ENCODE measurements at regions of chr2 and their contacts with region 1.

Region 1: DNA sequence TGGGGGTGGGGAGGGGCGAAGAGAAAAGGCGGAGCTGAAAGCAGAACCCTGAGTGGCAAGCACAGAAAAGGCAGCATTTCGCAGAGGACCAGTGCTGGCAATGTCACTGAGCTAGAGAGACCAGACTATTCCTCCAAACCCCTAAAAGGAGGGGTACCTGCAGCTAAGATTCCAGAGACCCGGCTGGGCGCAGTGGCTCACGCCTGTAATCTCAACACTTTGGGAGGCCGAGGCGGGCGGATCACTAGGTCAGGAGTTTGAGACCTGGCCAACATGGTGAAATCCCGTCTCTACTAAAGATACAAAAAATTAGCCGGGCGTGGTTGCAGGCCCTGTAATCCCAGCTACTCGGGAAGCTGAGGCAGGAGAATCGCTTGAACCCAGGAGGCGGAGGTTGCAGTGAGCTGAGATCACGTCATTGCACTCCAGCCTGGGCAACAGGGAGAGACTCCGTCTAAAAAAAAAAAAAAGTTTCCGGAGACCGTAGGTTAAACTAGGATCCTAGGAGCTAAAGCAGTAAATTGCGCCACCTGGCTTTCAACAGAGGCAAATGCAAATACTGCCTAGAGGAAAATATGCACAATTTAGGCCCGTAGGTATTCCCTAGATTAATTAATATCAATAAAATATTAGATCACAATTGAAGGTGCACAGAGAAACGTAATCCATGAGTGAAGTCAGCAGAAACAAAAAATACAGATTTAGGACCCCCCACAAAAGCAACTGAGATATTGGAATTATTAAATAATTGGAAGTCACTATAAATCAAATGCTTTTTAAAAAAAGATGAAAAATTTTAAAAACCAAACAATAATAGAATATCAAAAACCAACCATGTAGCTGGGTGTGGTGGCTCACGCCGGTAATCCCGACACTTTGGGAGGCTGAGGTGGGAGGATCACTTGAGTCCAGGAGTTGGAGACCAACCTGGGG is 4.9 kb downstream of the UCN start:
- DNase-seq: peak; percentile 66
- ATAC-seq: peak; percentile 57
- H3K4me3 Mint-ChIP-seq: peak overlapping the region; percentile 56
- H3K27ac Mint-ChIP-seq: peak overlapping the region; percentile 58
- H3K4me1 Mint-ChIP-seq: peaks cover 13% of the 10 kb centered on the region
- H3K27me3 Mint-ChIP-seq: peaks cover 4% of the 10 kb centered on the region

Region 2: GRCh38 chr2:27059141-27059820 is 244.1 kb before region 1 on chr2:
- CTCF ChIA-PET with region 1: no interaction called
- POLR2A ChIA-PET with region 1: no interaction called
- DNase-seq: no peak
- ATAC-seq: no peak
- H3K4me3 Mint-ChIP-seq: no peak overlapping the region
- H3K27ac Mint-ChIP-seq: no peak overlapping the region
- H3K4me1 Mint-ChIP-seq: no peaks in the 10 kb centered on the region
- H3K27me3 Mint-ChIP-seq: no peaks in the 10 kb centered on the region

Region 3: DNA sequence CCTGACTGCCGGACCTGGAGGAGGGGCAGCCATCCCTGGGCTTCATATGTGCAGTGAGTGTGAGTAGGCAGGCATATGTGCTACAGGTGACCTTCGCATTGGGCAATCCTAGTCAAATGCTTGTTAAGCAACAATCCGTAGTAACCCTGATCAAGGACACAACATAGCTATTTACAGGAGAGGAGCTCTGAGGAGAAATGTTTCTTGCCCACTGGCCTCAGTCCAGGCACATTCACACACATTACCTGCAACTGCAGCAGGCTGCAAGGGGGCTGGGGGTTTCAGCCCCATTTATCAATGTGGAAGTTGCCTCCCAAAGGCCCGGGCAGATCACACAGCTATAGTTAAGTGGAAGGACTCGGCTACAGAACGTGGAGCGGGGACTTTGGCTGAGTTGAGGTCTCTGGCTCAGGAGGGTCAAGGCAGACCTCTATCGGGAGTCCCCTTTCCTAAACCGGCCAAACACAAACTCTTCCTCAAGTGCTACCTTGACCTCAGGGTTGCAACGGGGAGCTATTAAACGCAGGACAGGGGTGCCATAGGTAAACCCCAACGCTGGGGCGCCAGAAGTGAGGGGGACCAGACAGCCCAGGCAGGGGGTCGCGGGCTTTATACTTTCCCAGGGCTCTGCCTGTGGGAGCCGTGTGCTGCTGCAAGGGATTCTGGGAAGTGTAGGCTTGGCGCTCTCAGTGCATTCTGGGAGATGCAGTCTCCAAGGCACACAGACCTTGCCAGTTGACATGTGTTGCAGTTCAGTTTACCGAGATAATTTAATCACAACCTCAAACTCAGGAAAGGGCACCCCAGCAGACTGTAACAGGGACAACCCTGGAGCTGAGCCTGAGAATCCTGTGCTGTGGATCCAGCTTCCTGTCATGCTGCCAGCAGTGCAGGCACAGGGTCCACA is 207.4 kb before region 1 on chr2:
- CTCF ChIA-PET with region 1: interaction called, 23 read pairs
- POLR2A ChIA-PET with region 1: no interaction called
- DNase-seq: peak; percentile 61
- ATAC-seq: peak; percentile 76
- H3K4me3 Mint-ChIP-seq: peak overlapping the region; percentile 29
- H3K27ac Mint-ChIP-seq: peak overlapping the region; percentile 60
- H3K4me1 Mint-ChIP-seq: peaks cover 14% of the 10 kb centered on the region
- H3K27me3 Mint-ChIP-seq: no peaks in the 10 kb centered on the region

Region 4: GRCh38 chr2:27200321-27200720 is 103.0 kb before region 1 on chr2:
- CTCF ChIA-PET with region 1: no interaction called
- POLR2A ChIA-PET with region 1: no interaction called
- DNase-seq: no peak
- ATAC-seq: no peak
- H3K4me3 Mint-ChIP-seq: no peak overlapping the region
- H3K27ac Mint-ChIP-seq: no peak overlapping the region
- H3K4me1 Mint-ChIP-seq: peaks cover 12% of the 10 kb centered on the region
- H3K27me3 Mint-ChIP-seq: no peaks in the 10 kb centered on the region

Region 5: DNA sequence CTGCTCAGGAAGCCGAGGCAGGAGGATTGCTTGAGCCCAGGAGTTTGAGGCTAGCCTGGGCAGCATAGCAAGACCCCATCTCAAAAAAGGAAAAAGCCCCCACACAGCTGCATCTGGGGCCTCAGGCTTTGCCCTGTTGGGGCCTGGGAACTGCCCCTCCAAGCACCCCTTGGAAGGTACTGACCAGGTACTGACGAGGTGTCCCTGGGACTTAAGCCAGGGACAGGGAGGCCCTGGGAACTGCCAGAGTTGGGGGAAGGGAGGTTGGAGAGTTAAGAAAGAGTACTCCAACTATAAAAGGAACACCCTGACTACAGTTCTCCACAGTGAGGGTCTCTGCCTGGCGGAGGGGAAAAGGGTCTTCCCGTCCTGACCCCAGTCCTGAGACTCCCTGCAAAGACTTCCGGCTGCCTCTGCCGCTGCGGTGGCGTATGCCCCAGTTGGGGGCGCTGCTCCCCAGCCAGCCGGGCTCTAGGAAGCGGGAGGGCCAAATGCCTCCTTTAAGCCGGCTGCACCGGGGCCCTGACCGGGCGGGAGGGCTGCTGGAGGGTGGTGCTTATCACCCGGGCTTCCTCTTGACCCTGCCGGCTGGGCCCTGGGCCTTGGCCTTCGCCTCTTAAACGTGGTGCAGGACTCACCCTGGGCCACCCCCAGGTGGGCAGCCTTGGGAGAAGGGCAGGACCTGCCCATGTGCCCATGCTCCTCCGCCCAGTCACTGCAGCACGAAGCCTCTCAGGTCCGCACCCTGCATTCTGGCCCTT is 53.3 kb before region 1 on chr2:
- CTCF ChIA-PET with region 1: interaction called, 11 read pairs
- POLR2A ChIA-PET with region 1: no interaction called
- DNase-seq: peak; percentile 70
- ATAC-seq: peak; percentile 81
- H3K4me3 Mint-ChIP-seq: no peak overlapping the region
- H3K27ac Mint-ChIP-seq: no peak overlapping the region
- H3K4me1 Mint-ChIP-seq: no peaks in the 10 kb centered on the region
- H3K27me3 Mint-ChIP-seq: peaks cover 2% of the 10 kb centered on the region

Region 6: DNA sequence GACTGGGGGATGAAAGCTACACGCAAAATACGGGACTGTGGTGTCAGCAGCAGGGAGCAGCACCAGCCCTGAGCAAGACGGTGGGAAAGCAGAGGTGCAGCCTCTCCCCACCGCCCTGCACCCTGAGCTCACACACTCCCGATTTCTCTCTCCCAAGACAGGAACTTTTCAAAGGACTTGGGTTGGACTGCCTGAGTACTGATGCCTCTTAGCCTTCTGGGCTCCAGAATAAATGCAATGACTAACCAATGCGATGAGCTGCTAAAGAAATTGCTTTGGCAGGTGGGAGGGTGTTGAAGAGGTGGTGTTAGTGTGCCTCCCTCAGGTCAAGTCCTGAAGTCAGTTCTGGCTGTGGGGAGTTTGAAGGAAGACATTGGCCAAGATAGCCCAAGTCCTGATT is 11.5 kb before region 1 on chr2:
- CTCF ChIA-PET with region 1: interaction called, 36 read pairs
- POLR2A ChIA-PET with region 1: no interaction called
- DNase-seq: no peak
- ATAC-seq: no peak
- H3K4me3 Mint-ChIP-seq: no peak overlapping the region
- H3K27ac Mint-ChIP-seq: no peak overlapping the region
- H3K4me1 Mint-ChIP-seq: peaks cover 2% of the 10 kb centered on the region
- H3K27me3 Mint-ChIP-seq: peaks cover 27% of the 10 kb centered on the region

Region 7: GRCh38 chr2:27347641-27348040 is 44.3 kb after region 1 on chr2:
- CTCF ChIA-PET with region 1: interaction called, 10 read pairs
- POLR2A ChIA-PET with region 1: no interaction called
- DNase-seq: no peak
- ATAC-seq: no peak
- H3K4me3 Mint-ChIP-seq: no peak overlapping the region
- H3K27ac Mint-ChIP-seq: no peak overlapping the region
- H3K4me1 Mint-ChIP-seq: peaks cover 16% of the 10 kb centered on the region
- H3K27me3 Mint-ChIP-seq: no peaks in the 10 kb centered on the region